ENCODE measurements at regions of chr11 and their contacts with region 1.

Region 1: GRCh38 chr11:96342961-96343711 is at the start of gene MAML2:
- DNase-seq: peak; percentile 91 to 96 (median 95)
- H3K4me3 ChIP-seq: peak within 1 kb of the TSS; percentile 26 to 98 (median 87)
- H3K27ac ChIP-seq: peak within 1 kb of the TSS; percentile 53 to 67
- H3K4me1 ChIP-seq: peaks cover 26 to 47% (median 44%) of the 10 kb centered on the region in 4 experiments
- H3K27me3 ChIP-seq: no peaks in the 10 kb centered on the region

Region 2: GRCh38 chr11:96054870-96055705 is 288.0 kb before region 1 on chr11:
- CTCF ChIA-PET with region 1: interaction called, 62 read pairs
- POLR2A ChIA-PET with region 1: interaction called, 4 read pairs
- DNase-seq: peak; percentile 38 to 52 (median 51)
- H3K4me3 ChIP-seq: no peak overlapping the region
- H3K27ac ChIP-seq: no peak overlapping the region
- H3K4me1 ChIP-seq: peaks cover 0 to 2% (median 0%) of the 10 kb centered on the region in 4 experiments
- H3K27me3 ChIP-seq: no peaks in the 10 kb centered on the region

Region 3: DNA sequence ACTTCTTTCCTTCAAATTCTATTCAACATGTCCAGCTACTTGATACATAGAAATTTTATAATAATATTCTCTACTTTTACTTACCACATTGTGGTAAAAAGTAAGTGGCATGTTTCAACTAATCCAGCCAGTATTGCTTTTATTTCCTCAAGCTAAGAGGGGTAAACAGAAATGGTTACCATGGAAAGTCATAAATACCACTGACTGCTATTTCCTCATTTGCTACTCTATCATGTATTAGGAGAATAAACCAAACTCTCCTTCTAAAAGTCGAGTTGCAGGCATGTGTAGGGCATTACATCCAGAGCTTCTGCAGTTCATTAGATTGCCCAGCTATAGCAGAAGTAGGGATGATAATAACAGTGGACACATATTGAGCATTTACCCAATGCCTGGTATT is 208.5 kb before region 1 on chr11:
- CTCF ChIA-PET with region 1: interaction called, 13 read pairs
- POLR2A ChIA-PET with region 1: no interaction called
- DNase-seq: peak; percentile 91 to 97 (median 94)
- H3K4me3 ChIP-seq: peak overlapping the region in 2 of 7 experiments; percentile 19 to 33
- H3K27ac ChIP-seq: peak overlapping the region; percentile 53 to 77
- H3K4me1 ChIP-seq: peaks cover 12 to 30% (median 15%) of the 10 kb centered on the region in 4 experiments
- H3K27me3 ChIP-seq: no peaks in the 10 kb centered on the region

Region 4: GRCh38 chr11:96242971-96243647 is 100.0 kb before region 1 on chr11:
- CTCF ChIA-PET with region 1: interaction called, 14 read pairs
- POLR2A ChIA-PET with region 1: interaction called, 4 read pairs
- DNase-seq: peak; percentile 90 to 95 (median 94)
- H3K4me3 ChIP-seq: peak overlapping the region; percentile 6 to 79 (median 64)
- H3K27ac ChIP-seq: peak overlapping the region; percentile 46 to 87
- H3K4me1 ChIP-seq: peaks cover 26 to 57% (median 46%) of the 10 kb centered on the region in 4 experiments
- H3K27me3 ChIP-seq: no peaks in the 10 kb centered on the region

Region 5: GRCh38 chr11:96306933-96307775 is 36.0 kb before region 1 on chr11:
- CTCF ChIA-PET with region 1: interaction called, 95 read pairs
- POLR2A ChIA-PET with region 1: interaction called, 3 read pairs
- DNase-seq: peak; percentile 48 to 76 (median 76)
- H3K4me3 ChIP-seq: peak overlapping the region in 3 of 7 experiments; percentile 26 to 54 (median 53)
- H3K27ac ChIP-seq: peak overlapping the region; percentile 19 to 45
- H3K4me1 ChIP-seq: peaks cover 0 to 32% (median 14%) of the 10 kb centered on the region in 4 experiments
- H3K27me3 ChIP-seq: no peaks in the 10 kb centered on the region